SK-N-SH (cell line): ENCODE measurements at regions of chrX and their contacts with region 1.

Region 1: GRCh38 chrX:24693453-24694202 is at the start of gene POLA1:
- DNase-seq: peak; percentile 88
- H3K4me3 ChIP-seq: peak within 1 kb of the TSS; percentile 69 to 73
- H3K27ac ChIP-seq: peak within 1 kb of the TSS; percentile 47 to 77
- H3K4me1 ChIP-seq: no peaks in the 10 kb centered on the region; a peak in 1 of 4 replicates
- H3K27me3 ChIP-seq: no peaks in the 10 kb centered on the region
- CTCF ChIP-seq: peak; percentile 37
- EP300 ChIP-seq: no peak
- RAD21 ChIP-seq: peak; percentile 30
- polyA plus RNA-seq, gene POLA1: 1.9 and 2.8 TPM in 2 replicates

Region 2: DNA sequence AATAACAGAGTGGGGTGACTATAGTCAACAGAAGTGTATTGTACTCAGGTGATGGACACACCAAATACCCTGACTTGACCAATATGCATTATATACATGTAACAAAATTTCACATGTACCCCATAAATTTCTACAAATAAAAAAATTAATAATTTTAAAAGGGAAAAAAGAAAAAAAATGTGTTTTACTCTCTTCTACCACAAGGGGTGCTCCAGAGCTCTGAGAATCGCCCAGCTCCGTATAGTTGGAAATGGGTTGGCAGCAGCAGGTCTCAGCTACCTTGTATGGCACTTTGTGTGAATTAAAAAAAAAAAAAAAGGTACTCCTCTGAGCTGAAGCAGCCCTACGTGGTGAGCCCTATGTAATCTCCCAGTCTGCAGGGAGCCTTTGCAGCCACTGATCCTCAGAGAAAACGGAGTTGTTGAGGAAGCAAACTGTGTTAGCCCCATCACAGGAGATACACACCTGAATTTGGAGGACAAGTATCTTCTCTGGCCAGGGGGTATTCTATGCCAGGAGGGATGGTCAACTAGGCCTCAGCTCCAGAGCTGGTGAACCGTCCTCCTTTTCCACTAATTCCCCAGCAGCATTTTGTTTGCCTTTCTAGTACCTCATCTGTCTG is 17.1 kb before region 1 on chrX:
- CTCF ChIA-PET with region 1: interaction called, 12 read pairs
- POLR2A ChIA-PET with region 1: no interaction called
- DNase-seq: peak; percentile 38
- H3K4me3 ChIP-seq: no peak overlapping the region
- H3K27ac ChIP-seq: no peak overlapping the region
- H3K4me1 ChIP-seq: no peaks in the 10 kb centered on the region
- H3K27me3 ChIP-seq: no peaks in the 10 kb centered on the region; the same call in 1 of the 2 replicates
- CTCF ChIP-seq: peak; percentile 69
- EP300 ChIP-seq: no peak
- RAD21 ChIP-seq: peak; percentile 50